SK-N-SH (cell line): ENCODE measurements at regions of chr7 and their contacts with region 1.

Region 1: DNA sequence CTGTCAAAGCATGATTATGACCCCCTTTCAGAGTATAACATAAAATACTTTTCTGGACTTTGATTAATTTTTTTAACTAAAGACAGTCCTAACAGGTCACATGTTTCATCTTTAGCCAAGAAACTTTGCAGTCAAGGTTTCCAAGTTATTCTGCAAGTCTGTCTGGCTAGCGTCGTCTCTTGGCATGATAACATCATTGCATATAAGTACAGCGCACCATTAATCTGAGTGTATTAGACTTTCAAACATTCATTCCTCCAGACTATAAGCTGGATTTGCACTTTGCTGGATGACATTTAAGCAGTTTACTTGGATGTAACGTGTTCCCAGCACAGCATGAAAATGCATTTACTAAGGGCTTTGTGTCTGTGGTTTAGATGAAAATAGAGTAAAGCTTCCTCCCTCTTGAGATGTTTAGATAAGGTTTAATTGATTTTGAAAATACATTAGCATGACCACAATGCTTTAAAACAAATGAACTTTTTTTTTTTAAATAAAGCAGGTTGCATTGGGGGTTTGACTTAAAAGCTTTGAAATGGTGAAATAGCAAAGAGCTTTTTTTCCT is 349.0 kb upstream of the MTPN start:
- DNase-seq: peak; percentile 30
- H3K4me3 ChIP-seq: no peak overlapping the region
- H3K27ac ChIP-seq: peak overlapping the region in 1 of 2 experiments; percentile 22; a peak in 1 of 4 replicates
- H3K4me1 ChIP-seq: peaks cover 0 to 8% of the 10 kb centered on the region in 2 experiments; a peak in 1 of 4 replicates
- H3K27me3 ChIP-seq: no peaks in the 10 kb centered on the region
- CTCF ChIP-seq: no peak
- EP300 ChIP-seq: no peak
- RAD21 ChIP-seq: no peak

Region 2: DNA sequence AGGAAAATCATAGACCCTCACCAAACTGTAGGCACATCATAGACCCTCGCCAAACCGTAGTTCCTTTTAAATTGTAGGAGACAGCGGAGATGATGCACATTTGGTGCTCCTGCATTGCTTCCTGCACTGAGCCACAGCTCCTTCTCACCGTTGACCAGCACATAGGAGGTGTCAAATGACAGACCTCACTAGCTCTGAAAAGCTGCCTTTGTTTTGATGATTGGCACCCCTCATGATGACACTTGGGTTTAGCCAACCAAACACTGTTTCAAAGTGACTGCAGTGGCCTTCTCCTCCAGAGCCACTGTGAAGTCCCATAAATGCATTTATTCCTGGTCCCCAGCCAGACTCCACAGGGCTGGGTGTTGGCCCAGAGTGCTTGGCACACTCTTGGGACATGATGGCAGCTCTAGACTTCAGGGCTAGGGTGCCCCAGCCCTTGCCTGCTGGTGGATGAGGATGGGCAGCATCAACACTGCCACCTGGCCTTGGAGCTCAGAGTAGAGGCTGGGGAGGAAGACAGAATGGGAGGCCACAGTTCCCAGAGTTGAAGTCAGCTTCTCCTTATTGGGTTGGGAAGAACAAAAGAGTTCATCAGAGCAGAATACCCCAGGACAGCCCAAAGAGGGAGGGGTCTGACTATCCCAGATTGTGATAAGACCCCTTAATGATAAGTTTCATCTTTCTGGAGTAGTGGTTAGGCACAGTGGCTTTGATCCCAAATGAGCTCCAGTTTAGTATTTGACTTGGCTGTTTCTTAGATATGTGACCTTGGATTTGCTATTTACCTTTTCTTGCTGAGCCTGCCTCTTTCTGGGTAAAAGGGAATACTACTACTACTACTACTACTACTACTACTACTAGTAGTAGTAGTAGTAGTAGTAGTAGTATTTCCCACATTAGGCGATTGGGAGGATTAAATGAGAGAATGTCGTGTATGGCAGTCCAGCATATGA is 424.3 kb before region 1 on chr7:
- CTCF ChIA-PET with region 1: no interaction called
- POLR2A ChIA-PET with region 1: no interaction called
- DNase-seq: no peak
- H3K4me3 ChIP-seq: no peak overlapping the region
- H3K27ac ChIP-seq: no peak overlapping the region
- H3K4me1 ChIP-seq: no peaks in the 10 kb centered on the region
- H3K27me3 ChIP-seq: no peaks in the 10 kb centered on the region
- CTCF ChIP-seq: no peak
- EP300 ChIP-seq: no peak
- RAD21 ChIP-seq: no peak

Region 3: GRCh38 chr7:136336932-136337331 is 10.8 kb after region 1 on chr7:
- CTCF ChIA-PET with region 1: interaction called, 11 read pairs
- POLR2A ChIA-PET with region 1: no interaction called
- DNase-seq: no peak
- H3K4me3 ChIP-seq: no peak overlapping the region
- H3K27ac ChIP-seq: no peak overlapping the region
- H3K4me1 ChIP-seq: no peaks in the 10 kb centered on the region
- H3K27me3 ChIP-seq: no peaks in the 10 kb centered on the region
- CTCF ChIP-seq: no peak
- EP300 ChIP-seq: no peak
- RAD21 ChIP-seq: no peak